ENCODE measurements at regions of chr22 and their contacts with region 1.

Region 1: DNA sequence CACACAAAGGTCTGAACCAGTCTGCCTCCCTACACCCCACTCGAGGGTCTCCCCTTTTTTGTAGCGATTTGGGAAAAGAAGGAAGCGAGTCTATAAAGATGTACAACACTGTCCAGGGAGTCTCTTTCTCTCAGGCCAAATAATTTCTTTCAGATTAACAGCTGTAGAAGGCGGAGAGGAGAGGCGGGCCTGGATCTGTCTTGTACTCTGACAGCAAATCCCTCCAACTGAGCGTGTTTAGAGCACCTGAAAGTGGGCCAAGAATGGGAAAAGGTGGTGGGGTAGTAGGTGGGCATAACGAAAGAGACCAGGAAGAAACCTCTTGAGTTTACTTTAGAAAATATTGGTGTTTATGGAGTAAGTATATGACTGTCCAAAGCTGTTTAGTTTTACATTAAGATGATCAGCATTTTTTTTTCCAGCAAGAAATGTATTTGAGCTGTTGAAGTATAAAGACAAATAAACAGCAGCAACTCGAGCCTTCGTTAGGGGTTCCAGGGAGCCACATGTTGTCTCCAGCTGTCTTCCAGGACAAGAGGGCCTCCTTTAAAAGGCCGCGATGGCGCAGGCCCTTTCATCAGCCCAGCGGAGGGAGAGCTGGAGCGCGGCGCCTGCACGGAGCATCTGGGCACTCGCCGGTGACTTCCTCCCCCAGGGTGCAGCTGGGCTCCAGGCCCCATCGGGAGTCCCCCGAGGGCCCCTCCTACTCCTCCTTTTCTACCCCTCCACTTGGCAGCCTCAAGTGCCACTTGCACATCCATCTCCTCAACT is 34.9 kb downstream of the SCUBE1 start:
- DNase-seq: no peak

Region 2: GRCh38 chr22:43446916-43447315 is 138.7 kb after region 1 on chr22:
- intact Hi-C with region 1: no loop called
- DNase-seq: no peak

Region 3: GRCh38 chr22:43658823-43659222 is 350.6 kb after region 1 on chr22:
- intact Hi-C with region 1: loop called in 1 of 2 experiments (anchors 5 kb)
- DNase-seq: no peak